ENCODE measurements at regions of chr6 and their contacts with region 1.

Region 1: DNA sequence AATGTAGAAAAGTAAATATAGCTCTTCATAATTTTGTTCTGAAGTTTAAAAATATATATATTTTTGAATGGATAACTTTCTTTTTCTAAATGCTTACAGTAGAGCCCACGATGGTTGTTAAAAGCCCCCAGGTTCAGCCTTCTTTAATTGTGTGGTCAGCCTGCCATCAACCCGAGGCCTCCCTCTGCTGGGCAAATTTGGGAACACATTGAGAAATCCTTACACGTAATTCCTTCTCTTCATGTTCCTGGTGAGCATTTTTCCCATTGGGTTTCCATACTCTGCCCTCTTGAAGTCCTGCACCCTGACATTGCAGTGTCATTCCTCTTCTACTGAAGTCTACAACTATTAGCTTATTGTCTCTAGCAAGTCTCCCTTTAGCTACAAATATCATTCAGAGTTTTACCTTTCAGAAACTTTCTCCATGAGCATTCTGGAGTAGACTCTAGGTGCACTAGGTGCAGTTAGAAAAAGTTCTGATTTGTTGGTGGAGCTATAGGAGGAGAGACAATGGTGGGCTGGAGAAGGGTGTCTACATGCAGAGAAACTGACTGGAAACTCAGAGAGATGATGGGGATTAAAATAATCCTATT is 40.6 kb downstream of the TRIM38 start:
- DNase-seq: no peak
- H3K4me3 ChIP-seq: no peak overlapping the region
- H3K27ac ChIP-seq: no peak overlapping the region
- H3K4me1 ChIP-seq: peaks cover 0 to 23% (median 5%) of the 10 kb centered on the region in 6 donors
- H3K27me3 ChIP-seq: no peaks in the 10 kb centered on the region
- CTCF ChIP-seq: peak; percentile 42 to 82 (median 68)
- POLR2A ChIP-seq: no peak

Region 2: DNA sequence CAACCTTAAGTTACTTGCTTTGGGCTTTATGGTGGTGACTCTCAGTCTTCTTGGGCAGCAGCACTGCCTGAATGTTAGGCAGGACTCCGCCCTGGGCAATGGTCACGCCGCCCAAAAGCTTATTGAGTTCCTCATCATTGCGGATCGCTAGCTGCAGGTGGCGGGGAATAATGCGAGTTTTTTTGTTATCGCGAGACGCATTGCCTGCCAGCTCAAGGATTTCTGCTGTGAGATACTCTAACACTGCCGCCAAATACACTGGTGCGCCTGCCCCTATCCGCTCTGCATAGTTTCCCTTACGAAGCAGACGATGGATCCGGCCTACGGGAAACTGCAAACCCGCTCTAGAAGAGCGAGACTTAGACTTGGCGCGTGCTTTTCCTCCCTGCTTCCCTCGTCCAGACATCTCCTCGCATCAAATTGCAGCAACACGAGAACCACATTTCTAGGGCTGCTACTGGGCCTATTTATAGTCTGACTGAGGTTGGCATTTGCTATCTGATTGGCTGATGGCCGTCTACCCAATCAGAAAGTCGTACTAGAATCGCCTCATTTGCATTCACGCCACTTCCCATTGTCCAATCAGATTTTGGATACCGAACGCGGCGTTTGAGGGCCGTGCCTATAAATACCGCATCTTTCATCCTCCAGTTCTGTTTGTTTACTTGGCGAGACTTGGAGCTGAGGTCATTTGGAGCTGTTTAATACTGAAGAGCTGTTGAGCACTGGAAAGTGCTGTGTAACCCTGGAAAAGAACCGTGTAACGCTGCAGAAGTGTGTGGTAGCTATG is 276.9 kb before region 1 on chr6:
- intact Hi-C with region 1: loop called (anchors 10 kb)
- DNase-seq: no peak
- H3K4me3 ChIP-seq: no peak overlapping the region
- H3K27ac ChIP-seq: no peak overlapping the region
- H3K4me1 ChIP-seq: no peaks in the 10 kb centered on the region
- H3K27me3 ChIP-seq: peaks cover 0 to 21% (median 6%) of the 10 kb centered on the region in 7 donors
- CTCF ChIP-seq: no peak
- POLR2A ChIP-seq: no peak

Region 3: DNA sequence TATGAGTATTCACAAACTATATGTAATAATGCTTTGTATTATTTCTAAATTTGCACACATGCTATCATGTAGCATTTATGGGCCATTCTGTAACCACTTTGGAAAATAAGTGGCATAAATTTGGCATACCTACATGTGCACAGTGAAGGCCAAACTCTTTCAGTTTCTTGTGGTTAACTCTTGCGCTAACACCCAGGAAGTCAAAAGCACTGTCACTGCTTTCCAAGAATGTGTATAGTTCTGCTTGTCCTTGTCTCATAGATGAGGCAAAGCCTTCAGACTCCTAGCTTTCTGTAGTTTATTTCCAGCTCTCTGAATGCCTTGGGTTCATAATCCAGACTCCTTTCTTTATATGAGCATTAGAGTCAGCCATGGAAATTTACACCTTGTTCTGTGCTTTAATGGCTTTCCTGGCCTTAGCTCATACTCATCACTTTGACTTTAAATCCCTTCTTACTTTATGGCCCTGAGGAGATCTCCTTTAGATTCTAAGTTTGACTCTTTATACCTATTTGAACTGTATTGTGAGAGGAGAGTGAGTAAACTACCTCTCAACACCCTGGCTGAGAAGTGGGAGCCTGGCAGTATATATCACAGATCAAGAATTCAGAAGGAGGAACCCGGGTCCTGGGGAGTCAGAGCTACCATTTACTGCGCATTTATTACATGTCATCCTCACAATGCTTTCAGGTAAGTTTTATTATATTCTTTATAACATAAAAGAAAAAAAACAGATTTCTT is 128.2 kb before region 1 on chr6:
- intact Hi-C with region 1: no loop called
- DNase-seq: no peak
- H3K4me3 ChIP-seq: no peak overlapping the region
- H3K27ac ChIP-seq: no peak overlapping the region
- H3K4me1 ChIP-seq: no peaks in the 10 kb centered on the region
- H3K27me3 ChIP-seq: no peaks in the 10 kb centered on the region
- CTCF ChIP-seq: no peak
- POLR2A ChIP-seq: no peak